ENCODE measurements at regions of chr3 and their contacts with region 1.

Region 1: GRCh38 chr3:149975919-149976318 is 5.2 kb upstream of the PFN2 start:
- DNase-seq: no peak
- ATAC-seq: no peak
- H3K4me3 ChIP-seq: no peak overlapping the region
- H3K4me3 Mint-ChIP-seq: no peak overlapping the region
- H3K27ac ChIP-seq: no peak overlapping the region
- H3K27ac Mint-ChIP-seq: peak overlapping the region in 1 of 9 donors; percentile 0
- H3K4me1 ChIP-seq: no peaks in the 10 kb centered on the region
- H3K4me1 Mint-ChIP-seq: peaks cover 0 to 11% (median 8%) of the 10 kb centered on the region in 7 donors
- H3K27me3 ChIP-seq: peaks cover 0 to 5% of the 10 kb centered on the region in 2 donors
- H3K27me3 Mint-ChIP-seq: peaks cover 6 to 73% (median 36%) of the 10 kb centered on the region in 5 donors

Region 2: GRCh38 chr3:149964291-149964690 is 11.6 kb before region 1 on chr3:
- CTCF ChIA-PET with region 1: interaction called, 3 read pairs
- POLR2A ChIA-PET with region 1: no interaction called
- intact Hi-C with region 1: loop called in 1 of 2 experiments (anchors 2 kb)
- DNase-seq: no peak
- ATAC-seq: no peak
- H3K4me3 ChIP-seq: no peak overlapping the region
- H3K4me3 Mint-ChIP-seq: no peak overlapping the region
- H3K27ac ChIP-seq: no peak overlapping the region
- H3K27ac Mint-ChIP-seq: no peak overlapping the region
- H3K4me1 ChIP-seq: no peaks in the 10 kb centered on the region
- H3K4me1 Mint-ChIP-seq: peaks cover 0 to 10% (median 9%) of the 10 kb centered on the region in 7 donors
- H3K27me3 ChIP-seq: no peaks in the 10 kb centered on the region
- H3K27me3 Mint-ChIP-seq: peaks cover 0 to 14% (median 3%) of the 10 kb centered on the region in 5 donors